SK-N-SH (cell line): ENCODE measurements at regions of chr13 and their contacts with region 1.

Region 1: DNA sequence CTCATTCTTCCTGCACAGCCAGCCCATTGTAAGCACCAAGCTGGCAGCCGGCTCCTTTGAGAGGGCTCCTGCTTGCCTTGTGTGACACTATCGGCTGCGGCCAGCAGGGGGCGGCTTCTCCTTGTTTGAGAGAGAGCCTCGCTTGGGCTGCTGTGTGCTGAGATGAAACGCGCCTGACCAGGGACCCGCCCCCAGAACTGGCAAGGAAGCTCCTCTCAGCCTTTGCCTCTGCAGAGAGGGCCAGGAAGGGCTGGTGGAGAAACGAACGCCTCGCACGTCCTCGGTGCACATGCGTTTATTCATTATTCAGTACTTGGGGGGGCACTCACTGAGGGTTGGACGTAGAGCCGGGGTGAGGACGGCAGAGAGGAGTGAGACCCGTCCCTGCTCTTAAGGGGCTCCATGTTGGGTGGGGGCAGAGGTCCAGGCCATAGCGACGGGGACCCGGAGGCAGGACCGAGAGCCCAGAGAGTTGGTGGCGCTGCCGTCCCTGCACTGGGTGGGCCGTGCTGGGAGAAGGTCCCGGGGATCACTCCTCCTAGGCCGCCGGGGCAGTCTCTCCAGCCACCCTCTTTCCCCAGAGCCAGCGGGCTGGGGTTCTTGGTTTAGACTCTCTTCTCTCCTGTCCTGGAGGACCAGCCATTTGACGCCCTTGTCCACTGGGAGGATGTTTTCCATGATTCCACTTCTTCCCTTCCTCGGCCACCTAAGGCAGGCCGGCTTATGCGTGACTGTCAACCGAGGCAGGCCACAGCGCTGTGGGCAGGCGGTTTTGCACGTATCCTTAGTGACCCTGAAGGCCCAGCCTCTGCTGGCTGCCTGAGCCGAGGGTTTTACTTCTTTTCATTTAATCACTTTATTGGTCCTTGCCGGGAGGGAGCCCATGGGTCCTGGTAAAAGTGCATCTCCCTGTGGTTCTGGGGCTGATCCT is 174.5 kb downstream of the KATNAL1 start:
- DNase-seq: peak; percentile 91
- H3K4me3 ChIP-seq: peak overlapping the region in 1 of 2 experiments; percentile 28; a peak in 1 of 4 replicates
- H3K27ac ChIP-seq: peak overlapping the region in 1 of 2 experiments; percentile 30; a peak in 1 of 4 replicates
- H3K4me1 ChIP-seq: peaks cover 0 to 15% of the 10 kb centered on the region in 2 experiments; a peak in 2 of 4 replicates
- H3K27me3 ChIP-seq: no peaks in the 10 kb centered on the region
- CTCF ChIP-seq: peak; percentile 92
- EP300 ChIP-seq: 0 out of 4 replicates have a peak, but pooled peaks of 1 of the 2 experiments have one; percentile 14
- RAD21 ChIP-seq: peak; percentile 99

Region 2: DNA sequence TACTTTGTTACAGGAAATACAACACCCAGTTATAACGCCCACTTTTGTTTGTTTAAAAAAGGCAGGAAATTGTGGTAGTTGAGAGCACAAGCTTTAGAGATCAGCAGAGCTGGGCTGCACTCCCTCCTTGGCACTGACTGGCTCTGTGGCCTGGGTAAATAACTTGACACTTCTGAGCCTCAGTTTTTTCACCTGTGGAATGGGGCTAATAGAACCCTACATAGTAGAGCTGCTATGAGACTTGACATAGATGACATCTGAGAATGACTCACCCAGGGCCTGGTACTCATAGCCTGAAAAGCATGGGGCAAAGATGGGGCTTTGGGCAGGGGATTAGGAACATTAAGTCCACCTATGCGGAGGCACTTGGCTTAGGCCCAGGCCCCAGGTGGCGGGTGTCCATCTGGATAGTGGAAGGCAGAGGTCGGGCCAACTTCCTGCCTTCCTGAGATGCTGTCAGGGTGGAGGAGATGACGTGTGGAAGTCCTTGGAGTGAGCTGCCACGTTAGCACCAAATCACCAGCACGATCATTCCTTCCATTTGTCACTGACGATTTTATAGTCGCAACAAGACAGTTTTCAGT is 15.4 kb after region 1 on chr13:
- CTCF ChIA-PET with region 1: interaction called, 74 read pairs
- POLR2A ChIA-PET with region 1: interaction called, 3 read pairs
- DNase-seq: no peak
- H3K4me3 ChIP-seq: no peak overlapping the region
- H3K27ac ChIP-seq: no peak overlapping the region; a peak in 1 of 4 replicates
- H3K4me1 ChIP-seq: peaks cover 6 to 14% of the 10 kb centered on the region in 2 experiments; a peak in 3 of 4 replicates
- H3K27me3 ChIP-seq: no peaks in the 10 kb centered on the region
- CTCF ChIP-seq: no peak
- EP300 ChIP-seq: no peak
- RAD21 ChIP-seq: no peak

Region 3: DNA sequence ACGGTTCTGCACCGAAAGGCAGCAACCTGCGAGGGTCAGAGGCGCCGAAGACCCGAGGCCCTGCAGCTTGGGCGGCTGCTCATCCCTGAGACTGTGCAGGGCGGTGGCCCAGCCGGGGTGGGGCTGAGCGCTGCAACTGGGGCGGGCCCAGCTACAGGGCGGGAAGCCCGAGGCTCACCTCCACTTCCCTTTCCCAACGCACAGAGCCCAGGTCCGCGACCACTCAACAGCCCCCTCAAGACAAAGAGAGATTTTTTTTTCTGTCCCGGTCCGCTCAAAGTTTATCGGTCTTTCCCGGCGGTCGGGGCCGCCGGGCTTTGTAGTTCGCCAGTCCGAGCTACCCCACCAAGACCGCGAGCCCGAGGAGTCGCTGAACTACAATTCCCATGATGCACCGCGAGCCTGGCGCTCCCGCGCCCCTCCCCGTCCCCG is 173.9 kb after region 1 on chr13:
- CTCF ChIA-PET with region 1: interaction called, 22 read pairs
- POLR2A ChIA-PET with region 1: interaction called, 4 read pairs
- DNase-seq: peak; percentile 93
- H3K4me3 ChIP-seq: peak overlapping the region; percentile 91 to 99
- H3K27ac ChIP-seq: peak overlapping the region; percentile 78 to 94
- H3K4me1 ChIP-seq: peaks cover 16 to 27% of the 10 kb centered on the region in 2 experiments
- H3K27me3 ChIP-seq: no peaks in the 10 kb centered on the region
- CTCF ChIP-seq: no peak
- EP300 ChIP-seq: no peak
- RAD21 ChIP-seq: no peak

Region 4: GRCh38 chr13:30421093-30422053 is 288.5 kb after region 1 on chr13:
- CTCF ChIA-PET with region 1: interaction called, 13 read pairs
- POLR2A ChIA-PET with region 1: no interaction called
- DNase-seq: peak; percentile 77
- H3K4me3 ChIP-seq: peak overlapping the region; percentile 65 to 77
- H3K27ac ChIP-seq: peak overlapping the region; percentile 86
- H3K4me1 ChIP-seq: peaks cover 7 to 11% of the 10 kb centered on the region in 2 experiments; a peak in 2 of 4 replicates
- H3K27me3 ChIP-seq: no peaks in the 10 kb centered on the region
- CTCF ChIP-seq: no peak
- EP300 ChIP-seq: peak in 1 of 2 experiments; percentile 32; a peak in 1 of 4 replicates
- RAD21 ChIP-seq: no peak

Region 5: GRCh38 chr13:30802953-30803478 is 670.1 kb after region 1 on chr13:
- CTCF ChIA-PET with region 1: interaction called, 15 read pairs
- POLR2A ChIA-PET with region 1: no interaction called
- DNase-seq: peak; percentile 82
- H3K4me3 ChIP-seq: peak overlapping the region in 1 of 2 experiments; percentile 17; a peak in 1 of 4 replicates
- H3K27ac ChIP-seq: no peak overlapping the region
- H3K4me1 ChIP-seq: peaks cover 19 to 24% of the 10 kb centered on the region in 2 experiments
- H3K27me3 ChIP-seq: no peaks in the 10 kb centered on the region
- CTCF ChIP-seq: peak; percentile 89
- EP300 ChIP-seq: no peak
- RAD21 ChIP-seq: peak; percentile 95